Ovary (tissue), 10 donors: ENCODE measurements at regions of chr12 and their contacts with region 1.

Region 1: DNA sequence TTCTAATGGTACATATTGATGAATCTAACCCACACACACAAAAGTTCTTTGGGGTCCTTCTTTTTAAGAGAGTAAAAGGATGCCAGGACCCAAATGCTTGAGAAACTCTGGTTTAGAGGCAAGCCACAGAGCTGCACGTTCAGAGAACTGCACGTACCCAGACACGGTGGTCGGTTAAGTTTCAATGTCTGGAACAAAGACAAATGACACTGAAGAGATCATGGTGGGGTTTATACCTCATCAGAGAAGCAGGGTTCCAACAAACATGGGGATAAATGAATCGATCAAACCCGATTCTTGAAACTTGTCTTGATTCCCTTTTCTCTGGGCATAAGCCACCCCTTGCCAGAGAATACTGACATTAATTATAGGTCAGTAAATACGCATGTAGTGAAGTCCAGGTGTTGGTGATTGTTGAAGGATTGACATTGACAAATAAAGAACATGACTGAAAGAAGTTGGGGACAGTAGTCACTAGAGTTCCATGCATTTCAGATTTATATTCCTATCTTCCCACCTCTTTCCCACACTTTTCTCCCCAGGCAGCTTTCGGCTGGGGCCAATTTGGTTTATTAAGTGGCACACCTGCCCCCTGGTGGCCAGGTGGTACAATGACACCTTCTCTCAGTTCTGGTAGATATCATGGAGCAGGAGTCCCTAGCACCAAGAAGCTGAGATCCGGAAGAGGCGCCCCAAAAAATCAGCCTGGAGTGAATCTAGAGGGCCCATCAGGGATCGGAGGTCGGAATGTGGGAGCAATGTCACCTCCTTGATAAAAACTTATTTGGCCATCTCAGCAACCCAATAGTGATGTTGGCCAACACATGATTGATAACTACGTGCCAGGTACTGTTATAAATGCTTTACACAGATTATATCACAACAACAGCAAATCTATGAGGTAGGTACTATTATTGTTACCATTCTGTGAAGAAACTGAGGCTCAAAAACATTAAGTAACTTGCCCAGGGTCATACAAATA is 17.8 kb upstream of the HDAC7 start:
- DNase-seq: peak; percentile 70 to 84 (median 81)
- H3K4me3 ChIP-seq: no peak overlapping the region
- H3K27ac ChIP-seq: peak overlapping the region in 1 of 2 donors; percentile 15
- H3K4me1 ChIP-seq: peaks cover 4% of the 10 kb centered on the region
- H3K27me3 ChIP-seq: no peaks in the 10 kb centered on the region
- CTCF ChIP-seq: peak; percentile 67 to 92 (median 91)
- EP300 ChIP-seq: no peak
- POLR2A ChIP-seq: no peak

Region 2: DNA sequence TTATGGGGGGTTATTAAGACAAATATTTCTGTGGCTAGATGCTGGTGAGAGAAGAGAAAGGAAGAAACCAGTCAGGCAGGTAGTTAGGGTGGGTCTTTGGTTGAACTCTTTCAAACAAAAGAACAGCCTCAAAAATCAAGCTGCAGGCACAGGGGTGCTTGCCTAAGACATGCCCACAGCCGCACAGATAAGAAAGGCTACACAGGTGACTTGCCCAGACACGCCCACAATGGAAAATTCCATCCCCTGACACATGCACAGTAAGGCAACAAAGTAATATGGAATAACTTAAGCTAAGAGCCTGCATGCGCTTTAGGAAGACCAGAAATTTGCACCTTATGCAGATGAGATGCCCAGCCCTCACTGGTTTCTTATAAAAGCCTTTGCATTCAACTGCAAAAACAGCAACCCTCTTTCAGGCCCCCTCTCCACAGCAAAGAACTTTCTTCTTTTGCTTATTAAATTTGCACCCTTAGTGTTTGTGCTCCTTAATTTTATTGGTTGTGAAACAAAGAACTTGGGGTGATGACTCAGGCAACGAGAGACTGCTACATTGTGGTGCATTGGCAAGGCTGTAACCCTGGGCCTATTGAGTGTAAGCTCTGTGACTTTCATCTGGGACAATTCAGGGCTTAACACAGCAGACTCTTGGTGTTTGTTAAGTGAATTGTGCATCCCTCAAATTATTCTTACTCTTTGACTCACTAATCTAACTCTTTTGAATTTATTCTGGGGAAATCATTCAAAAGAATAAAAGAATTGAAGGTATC is 281.0 kb before region 1 on chr12:
- intact Hi-C with region 1: no loop called
- DNase-seq: no peak
- H3K4me3 ChIP-seq: no peak overlapping the region
- H3K27ac ChIP-seq: no peak overlapping the region
- H3K4me1 ChIP-seq: no peaks in the 10 kb centered on the region
- H3K27me3 ChIP-seq: no peaks in the 10 kb centered on the region
- CTCF ChIP-seq: no peak
- EP300 ChIP-seq: no peak
- POLR2A ChIP-seq: no peak

Region 3: DNA sequence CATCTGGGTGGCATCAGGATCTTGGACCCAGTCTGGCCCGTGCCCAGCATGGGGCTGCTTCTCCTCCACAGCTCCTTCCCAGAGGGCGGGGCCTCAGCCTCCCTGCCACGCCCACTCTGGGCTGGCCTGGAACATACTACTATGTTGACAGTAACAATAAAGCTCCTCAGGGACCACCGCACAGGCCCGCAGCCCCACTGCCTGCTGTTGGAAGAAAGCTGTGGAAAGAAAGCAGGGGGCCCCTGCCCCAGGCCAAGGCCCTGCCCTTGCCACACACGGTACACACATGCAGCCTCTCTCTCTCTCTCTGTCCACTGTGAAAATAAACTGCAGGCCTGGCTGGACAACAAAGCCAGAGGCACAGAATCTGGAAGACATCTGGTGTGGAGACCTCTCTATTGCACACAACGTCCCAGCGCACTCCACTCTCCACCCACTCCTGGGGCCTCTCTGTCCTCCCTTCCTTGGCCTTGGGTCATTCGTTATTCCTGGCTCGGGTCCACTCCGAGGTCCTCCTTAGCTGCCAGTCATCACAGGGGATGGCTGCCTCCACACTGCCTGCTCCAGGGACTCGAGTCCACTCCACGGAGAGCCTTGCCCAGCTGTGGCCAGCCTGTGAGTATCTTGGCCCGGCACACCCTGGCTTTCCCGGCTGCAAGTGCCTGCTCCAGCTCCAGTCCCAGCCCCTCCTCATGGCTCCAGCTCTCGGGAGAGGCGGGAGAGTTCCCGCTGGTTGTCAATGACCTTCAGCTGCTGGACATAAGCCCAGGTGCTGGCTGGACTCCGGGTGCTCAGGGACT is 100.4 kb before region 1 on chr12:
- intact Hi-C with region 1: loop called in 2 of 4 experiments (anchors 2 to 10 kb)
- DNase-seq: peak; percentile 94 to 98 (median 96)
- H3K4me3 ChIP-seq: no peak overlapping the region
- H3K27ac ChIP-seq: peak overlapping the region; percentile 68 to 91
- H3K4me1 ChIP-seq: peaks cover 37% of the 10 kb centered on the region
- H3K27me3 ChIP-seq: no peaks in the 10 kb centered on the region
- CTCF ChIP-seq: peak in 1 of 3 donors; percentile 6
- EP300 ChIP-seq: no peak
- POLR2A ChIP-seq: peak; percentile 34

Region 4: GRCh38 chr12:47779301-47779942 is 58.1 kb before region 1 on chr12:
- intact Hi-C with region 1: loop called in 3 of 4 experiments (anchors 5 to 10 kb)
- DNase-seq: peak; percentile 84 to 94 (median 93)
- H3K4me3 ChIP-seq: no peak overlapping the region
- H3K27ac ChIP-seq: peak overlapping the region in 1 of 2 donors; percentile 34
- H3K4me1 ChIP-seq: peaks cover 30% of the 10 kb centered on the region
- H3K27me3 ChIP-seq: no peaks in the 10 kb centered on the region
- CTCF ChIP-seq: peak; percentile 95 to 97 (median 96)
- EP300 ChIP-seq: no peak
- POLR2A ChIP-seq: no peak

Region 5: DNA sequence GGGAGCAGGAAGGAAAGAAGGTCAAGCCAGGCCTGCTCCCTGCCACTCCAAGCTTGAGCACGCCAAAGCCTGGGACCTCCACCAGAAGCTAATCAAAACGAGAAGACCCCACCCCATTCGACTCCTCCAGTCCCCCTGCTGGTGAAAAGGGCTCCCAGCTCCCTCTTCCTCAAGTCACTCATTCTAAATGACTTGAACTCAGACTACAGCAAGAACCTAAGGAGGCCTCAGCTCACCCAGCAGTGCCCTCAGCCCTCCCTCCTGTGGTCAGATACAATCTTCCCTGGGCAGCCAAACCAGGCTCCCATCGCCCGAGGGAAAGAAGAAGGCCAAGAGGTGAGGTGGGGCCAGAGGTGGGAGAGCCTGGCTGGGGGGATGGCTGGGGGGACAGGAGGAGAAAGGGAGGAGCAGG is 35.2 kb before region 1 on chr12:
- intact Hi-C with region 1: loop called in 2 of 4 experiments (anchors 2 to 5 kb)
- DNase-seq: no peak
- H3K4me3 ChIP-seq: no peak overlapping the region
- H3K27ac ChIP-seq: peak overlapping the region in 1 of 2 donors; percentile 24
- H3K4me1 ChIP-seq: peaks cover 30% of the 10 kb centered on the region
- H3K27me3 ChIP-seq: no peaks in the 10 kb centered on the region
- CTCF ChIP-seq: no peak
- EP300 ChIP-seq: no peak
- POLR2A ChIP-seq: no peak